Activated CD8-positive, alpha-beta memory T cell treated with anti-CD3 and anti-CD28 coated beads, Interleukin-2, amount 10 ng/mL, durations not matched to agents 7 days and 5 days (primary cell): ENCODE measurements at regions of chr17 and their contacts with region 1.

Region 1: DNA sequence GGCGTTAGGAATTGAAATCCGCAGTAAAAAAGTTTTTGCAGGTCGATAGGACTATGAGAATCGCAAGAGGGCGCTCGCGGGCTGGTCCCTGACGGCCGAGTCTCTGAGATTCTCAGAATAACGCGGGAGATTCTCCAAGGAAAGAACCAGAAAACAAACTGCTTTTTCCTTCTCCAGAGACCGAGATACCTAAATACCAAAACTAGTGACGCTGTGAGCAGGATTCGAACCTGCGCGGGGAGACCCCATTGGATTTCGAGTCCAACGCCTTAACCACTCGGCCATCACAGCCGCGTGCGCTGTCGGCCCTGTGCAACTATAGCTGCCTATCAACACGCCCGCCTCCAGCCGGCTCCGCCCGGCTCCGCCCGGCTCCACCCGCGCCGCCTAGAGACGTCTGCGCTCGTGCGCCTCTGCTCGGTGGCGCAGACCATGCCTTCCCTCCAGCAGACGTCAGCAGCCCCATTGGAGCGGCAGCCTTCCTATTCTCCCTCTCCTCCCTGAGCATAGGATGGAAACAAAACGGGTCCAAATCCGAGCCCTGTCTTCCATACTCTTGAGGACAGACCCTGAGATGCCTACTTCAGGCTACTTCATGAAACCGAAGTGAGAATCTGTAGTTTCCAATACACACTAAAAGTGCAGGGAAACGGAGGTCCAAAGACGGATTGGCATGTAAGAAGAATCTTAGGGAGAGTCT is 13.4 kb downstream of the PER1 start:
- DNase-seq: peak; percentile 98
- ATAC-seq: peak; percentile 95
- H3K4me3 Mint-ChIP-seq: no peak overlapping the region
- H3K27ac Mint-ChIP-seq: no peak overlapping the region
- H3K4me1 Mint-ChIP-seq: peaks cover 2% of the 10 kb centered on the region
- H3K27me3 Mint-ChIP-seq: peaks cover 5% of the 10 kb centered on the region

Region 2: DNA sequence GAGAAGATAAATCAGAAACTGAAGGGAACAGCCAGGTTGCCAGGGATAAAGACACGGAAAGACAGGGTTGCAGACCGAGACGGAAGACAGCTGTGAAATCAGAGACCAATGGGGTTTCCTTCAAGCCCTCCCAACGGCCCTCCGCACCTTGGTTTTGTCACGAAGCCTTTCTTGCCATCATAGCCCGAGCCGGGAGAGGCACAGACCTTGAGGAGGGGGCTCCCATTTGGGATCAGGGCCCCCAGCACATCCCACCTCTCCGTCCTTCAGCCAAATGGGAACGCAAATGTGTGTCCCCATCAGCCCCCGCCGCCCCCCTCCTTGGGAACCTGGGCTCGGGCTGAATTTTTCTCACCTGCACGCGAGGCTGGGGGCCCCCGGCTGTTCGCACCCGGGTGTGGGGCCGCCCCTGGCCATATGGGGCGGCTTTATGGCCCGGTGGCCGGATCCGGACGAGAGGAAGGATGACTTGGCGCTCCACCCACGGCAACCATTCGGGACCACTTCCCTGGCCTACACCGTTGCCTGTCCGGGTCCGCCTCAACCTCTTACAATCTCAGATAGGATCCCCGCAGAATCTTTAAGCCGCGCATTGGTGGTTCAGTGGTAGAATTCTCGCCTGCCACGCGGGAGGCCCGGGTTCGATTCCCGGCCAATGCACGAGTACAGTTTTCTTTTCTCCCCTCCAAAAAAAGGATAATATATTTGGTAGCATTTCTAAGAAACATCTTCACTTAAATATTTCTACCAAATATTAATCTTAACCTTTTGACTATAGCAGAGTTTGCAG is 13.5 kb before region 1 on chr17:
- CTCF ChIA-PET with region 1: interaction called, 47 read pairs
- DNase-seq: peak; percentile 92
- ATAC-seq: peak; percentile 24
- H3K4me3 Mint-ChIP-seq: peak overlapping the region; percentile 95
- H3K27ac Mint-ChIP-seq: peak overlapping the region; percentile 80
- H3K4me1 Mint-ChIP-seq: peaks cover 56% of the 10 kb centered on the region
- H3K27me3 Mint-ChIP-seq: peaks cover 46% of the 10 kb centered on the region

Region 3: DNA sequence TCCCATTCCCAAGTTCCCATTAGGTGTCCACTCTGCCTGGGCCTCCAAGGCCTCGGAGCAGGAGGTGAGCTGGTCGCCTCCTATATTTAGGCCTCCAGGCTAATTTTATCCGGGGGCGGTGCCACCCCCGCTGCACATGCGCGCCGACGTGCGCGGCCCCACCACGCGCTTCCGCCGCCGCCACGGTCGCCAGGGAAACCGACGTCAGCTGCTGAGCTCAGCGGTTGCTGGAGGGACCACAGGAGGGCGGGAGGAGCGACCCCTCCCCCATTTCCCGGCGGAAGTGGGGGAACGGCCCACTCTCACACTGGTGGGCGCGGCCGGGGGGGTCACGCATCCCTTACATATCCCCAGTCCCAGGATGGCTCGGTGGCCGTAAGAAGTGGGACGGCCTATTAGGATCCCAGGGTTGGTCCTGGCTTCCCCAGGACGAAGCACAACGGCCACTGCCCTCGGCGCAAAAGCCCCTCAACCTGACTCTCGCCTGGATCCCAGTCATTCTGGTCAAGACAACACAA is 12.4 kb after region 1 on chr17:
- CTCF ChIA-PET with region 1: interaction called, 92 read pairs
- DNase-seq: peak; percentile 94
- ATAC-seq: peak; percentile 47
- H3K4me3 Mint-ChIP-seq: peak overlapping the region; percentile 90
- H3K27ac Mint-ChIP-seq: peak overlapping the region; percentile 91
- H3K4me1 Mint-ChIP-seq: peaks cover 21% of the 10 kb centered on the region
- H3K27me3 Mint-ChIP-seq: no peaks in the 10 kb centered on the region

Region 4: GRCh38 chr17:8156246-8156992 is 17.6 kb after region 1 on chr17:
- CTCF ChIA-PET with region 1: interaction called, 92 read pairs
- DNase-seq: peak; percentile 100
- ATAC-seq: peak; percentile 79
- H3K4me3 Mint-ChIP-seq: no peak overlapping the region
- H3K27ac Mint-ChIP-seq: no peak overlapping the region
- H3K4me1 Mint-ChIP-seq: peaks cover 43% of the 10 kb centered on the region
- H3K27me3 Mint-ChIP-seq: no peaks in the 10 kb centered on the region

Region 5: GRCh38 chr17:8162233-8162996 is 23.6 kb after region 1 on chr17 and contains the start of gene VAMP2:
- CTCF ChIA-PET with region 1: interaction called, 92 read pairs
- DNase-seq: peak; percentile 90
- ATAC-seq: peak; percentile 61
- H3K4me3 Mint-ChIP-seq: peak within 1 kb of the TSS; percentile 85
- H3K27ac Mint-ChIP-seq: peak within 1 kb of the TSS; percentile 99
- H3K4me1 Mint-ChIP-seq: peaks cover 57% of the 10 kb centered on the region
- H3K27me3 Mint-ChIP-seq: no peaks in the 10 kb centered on the region
- total RNA-seq, gene VAMP2: 47.6 to 68.9 TPM

Region 6: GRCh38 chr17:8189711-8190477 is 51.1 kb after region 1 on chr17 and contains the start of gene BORCS6:
- CTCF ChIA-PET with region 1: interaction called, 21 read pairs
- DNase-seq: peak; percentile 99
- ATAC-seq: peak; percentile 70
- H3K4me3 Mint-ChIP-seq: no peak within 1 kb of the TSS
- H3K27ac Mint-ChIP-seq: no peak within 1 kb of the TSS
- H3K4me1 Mint-ChIP-seq: peaks cover 10% of the 10 kb centered on the region
- H3K27me3 Mint-ChIP-seq: no peaks in the 10 kb centered on the region
- total RNA-seq, gene BORCS6: 14.9 to 16.8 TPM

Region 7: GRCh38 chr17:8248751-8249607 is 110.2 kb after region 1 on chr17 and contains the start of gene PFAS:
- CTCF ChIA-PET with region 1: interaction called, 17 read pairs
- DNase-seq: peak; percentile 98
- ATAC-seq: peak; percentile 75
- H3K4me3 Mint-ChIP-seq: peak within 1 kb of the TSS; percentile 98
- H3K27ac Mint-ChIP-seq: peak within 1 kb of the TSS; percentile 100
- H3K4me1 Mint-ChIP-seq: peaks cover 38% of the 10 kb centered on the region
- H3K27me3 Mint-ChIP-seq: no peaks in the 10 kb centered on the region
- total RNA-seq, gene PFAS: 75.1 to 113 TPM